ENCODE measurements at regions of chr22 and their contacts with region 1.

Region 1: GRCh38 chr22:29040385-29041275 is 21.0 kb downstream of the C22orf31 start:
- DNase-seq: peak; percentile 56 to 63
- H3K4me3 ChIP-seq: no peak overlapping the region
- H3K4me3 Mint-ChIP-seq: no peak overlapping the region
- H3K27ac Mint-ChIP-seq: no peak overlapping the region
- H3K4me1 ChIP-seq: peaks cover 38% of the 10 kb centered on the region
- H3K4me1 Mint-ChIP-seq: peaks cover 7% of the 10 kb centered on the region
- H3K27me3 ChIP-seq: no peaks in the 10 kb centered on the region
- H3K27me3 Mint-ChIP-seq: no peaks in the 10 kb centered on the region
- CTCF ChIP-seq: peak; percentile 90 to 93

Region 2: DNA sequence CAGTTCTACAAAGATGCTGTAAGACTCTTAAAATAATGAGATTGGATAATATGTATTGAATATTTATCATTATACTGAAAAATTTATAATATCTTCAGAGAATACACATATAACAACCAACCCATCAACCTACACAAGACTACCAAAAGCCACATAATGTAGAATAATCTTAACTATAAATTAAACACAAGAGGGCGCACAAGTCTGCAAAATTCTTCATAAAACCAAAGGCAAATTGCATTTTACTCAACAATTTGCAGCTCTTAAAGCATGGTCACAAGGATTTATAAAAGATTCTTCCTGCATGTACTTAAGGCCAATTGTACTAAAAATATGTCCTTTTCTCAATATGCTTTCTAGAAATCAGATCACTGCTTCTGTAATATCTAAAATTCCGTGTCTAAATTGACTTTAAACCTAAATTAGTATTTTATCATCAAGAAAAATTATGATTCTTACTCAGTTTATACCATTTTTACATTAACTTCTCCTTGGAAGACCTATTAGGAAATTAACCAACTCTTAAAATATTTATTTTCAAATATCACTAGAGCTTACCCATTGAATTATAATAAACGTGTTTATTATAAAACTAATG is 440.0 kb before region 1 on chr22:
- CTCF ChIA-PET with region 1: interaction called, 6 read pairs
- POLR2A ChIA-PET with region 1: no interaction called
- intact Hi-C with region 1: loop called (anchors 5 kb)
- DNase-seq: peak in 1 of 2 experiments; percentile 44
- H3K4me3 ChIP-seq: no peak overlapping the region
- H3K4me3 Mint-ChIP-seq: no peak overlapping the region
- H3K27ac Mint-ChIP-seq: no peak overlapping the region
- H3K4me1 ChIP-seq: no peaks in the 10 kb centered on the region
- H3K4me1 Mint-ChIP-seq: no peaks in the 10 kb centered on the region
- H3K27me3 ChIP-seq: no peaks in the 10 kb centered on the region
- H3K27me3 Mint-ChIP-seq: peaks cover 6% of the 10 kb centered on the region
- CTCF ChIP-seq: peak; percentile 41 to 66

Region 3: GRCh38 chr22:28855355-28856094 is 185.1 kb before region 1 on chr22:
- CTCF ChIA-PET with region 1: interaction called, 27 read pairs
- POLR2A ChIA-PET with region 1: no interaction called
- intact Hi-C with region 1: loop called (anchors 1 kb)
- DNase-seq: peak; percentile 52 to 73
- H3K4me3 ChIP-seq: no peak overlapping the region
- H3K4me3 Mint-ChIP-seq: no peak overlapping the region
- H3K27ac Mint-ChIP-seq: no peak overlapping the region
- H3K4me1 ChIP-seq: peaks cover 10% of the 10 kb centered on the region
- H3K4me1 Mint-ChIP-seq: peaks cover 10% of the 10 kb centered on the region
- H3K27me3 ChIP-seq: no peaks in the 10 kb centered on the region
- H3K27me3 Mint-ChIP-seq: no peaks in the 10 kb centered on the region
- CTCF ChIP-seq: peak; percentile 89 to 91

Region 4: GRCh38 chr22:28976588-28976987 is 64.0 kb before region 1 on chr22:
- CTCF ChIA-PET with region 1: no interaction called
- POLR2A ChIA-PET with region 1: no interaction called
- intact Hi-C with region 1: no loop called
- DNase-seq: no peak
- H3K4me3 ChIP-seq: no peak overlapping the region
- H3K4me3 Mint-ChIP-seq: no peak overlapping the region
- H3K27ac Mint-ChIP-seq: no peak overlapping the region
- H3K4me1 ChIP-seq: peaks cover 56% of the 10 kb centered on the region
- H3K4me1 Mint-ChIP-seq: peaks cover 44% of the 10 kb centered on the region
- H3K27me3 ChIP-seq: no peaks in the 10 kb centered on the region
- H3K27me3 Mint-ChIP-seq: no peaks in the 10 kb centered on the region
- CTCF ChIP-seq: no peak

Region 5: GRCh38 chr22:28992565-28993356 is 47.9 kb before region 1 on chr22:
- CTCF ChIA-PET with region 1: no interaction called
- POLR2A ChIA-PET with region 1: no interaction called
- intact Hi-C with region 1: loop called (anchors 5 kb)
- DNase-seq: no peak
- H3K4me3 ChIP-seq: no peak overlapping the region
- H3K4me3 Mint-ChIP-seq: no peak overlapping the region
- H3K27ac Mint-ChIP-seq: peak overlapping the region; percentile 2
- H3K4me1 ChIP-seq: peaks cover 6% of the 10 kb centered on the region; the same call in 1 of the 2 replicates
- H3K4me1 Mint-ChIP-seq: peaks cover 11% of the 10 kb centered on the region
- H3K27me3 ChIP-seq: no peaks in the 10 kb centered on the region
- H3K27me3 Mint-ChIP-seq: no peaks in the 10 kb centered on the region
- CTCF ChIP-seq: no peak

Region 6: DNA sequence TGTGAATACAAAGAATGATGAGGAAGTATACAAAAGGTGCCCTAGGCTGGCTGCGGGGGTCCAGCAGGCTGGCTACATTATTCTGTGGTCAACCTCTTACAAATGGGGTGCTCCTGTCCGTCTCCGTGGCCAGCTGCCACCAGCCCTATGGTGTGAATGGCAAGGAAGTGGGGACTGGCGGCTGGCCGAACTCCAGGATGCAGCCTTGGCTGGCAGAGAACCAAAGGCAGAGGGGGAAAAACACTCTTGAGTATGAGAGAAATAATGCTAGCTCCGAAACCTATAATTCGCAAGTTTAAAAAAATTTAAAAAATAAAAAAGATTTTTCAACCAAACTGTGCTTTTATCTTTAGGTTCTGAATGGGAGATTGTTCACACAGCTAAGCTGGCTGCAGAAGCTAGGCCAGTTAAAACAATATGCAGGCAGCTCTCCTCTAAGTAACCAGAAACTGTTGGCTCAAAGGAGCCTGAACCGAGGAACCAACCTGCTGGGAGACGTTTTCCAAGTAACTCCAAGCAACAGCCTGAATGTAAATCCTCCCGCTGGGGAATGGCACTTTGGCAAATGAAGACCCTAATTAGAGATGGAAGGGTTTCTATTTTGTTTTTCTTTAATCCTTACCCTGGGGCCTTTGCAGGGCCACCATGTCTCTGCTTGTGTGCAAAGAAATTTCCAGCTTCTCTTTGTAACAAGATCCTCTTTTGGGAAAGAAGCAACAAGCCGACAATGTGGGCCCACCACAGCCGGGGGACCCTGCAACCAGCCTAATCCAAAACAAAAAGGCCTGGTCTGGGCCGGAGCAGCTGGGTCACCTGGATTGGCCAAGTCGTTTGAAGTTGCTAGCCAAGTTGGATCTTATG is 29.2 kb before region 1 on chr22:
- CTCF ChIA-PET with region 1: no interaction called
- POLR2A ChIA-PET with region 1: no interaction called
- intact Hi-C with region 1: no loop called
- DNase-seq: no peak
- H3K4me3 ChIP-seq: no peak overlapping the region
- H3K4me3 Mint-ChIP-seq: no peak overlapping the region
- H3K27ac Mint-ChIP-seq: peak overlapping the region; percentile 14
- H3K4me1 ChIP-seq: peaks cover 56% of the 10 kb centered on the region
- H3K4me1 Mint-ChIP-seq: peaks cover 32% of the 10 kb centered on the region
- H3K27me3 ChIP-seq: no peaks in the 10 kb centered on the region
- H3K27me3 Mint-ChIP-seq: no peaks in the 10 kb centered on the region
- CTCF ChIP-seq: no peak

Measured in Caco-2 (cell line).